Mammary epithelial cell (primary cell): ENCODE measurements at regions of chr3 and their contacts with region 1.

Region 1: DNA sequence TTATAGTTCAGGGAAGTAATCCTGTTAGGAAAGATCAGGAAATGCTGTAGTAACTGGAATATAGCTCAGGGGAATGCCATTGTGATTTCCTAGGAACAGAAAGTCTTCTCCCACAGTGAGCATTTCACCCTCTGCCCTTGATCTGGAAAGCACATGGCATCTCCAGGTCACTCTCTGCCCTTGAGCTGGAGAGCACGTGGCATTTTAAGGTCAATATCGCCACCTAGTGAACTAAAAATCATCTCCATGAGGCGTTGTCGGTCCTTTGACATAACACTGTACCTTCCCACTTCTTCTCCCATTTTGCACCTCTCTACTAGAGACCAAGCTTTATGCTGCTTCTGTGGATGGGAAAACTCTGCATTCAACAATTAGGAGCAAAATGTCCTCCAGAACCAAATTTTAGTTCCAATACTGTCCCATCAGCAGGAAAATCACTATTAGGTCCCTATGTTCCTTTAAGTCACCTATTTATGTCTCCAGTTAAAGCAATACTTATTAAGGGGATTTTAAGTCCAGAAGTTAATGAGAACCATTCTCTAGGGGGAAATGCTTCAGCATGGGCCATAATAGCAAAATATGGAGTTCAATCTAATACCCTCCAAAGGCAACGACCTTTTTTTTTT is 54.7 kb upstream of the GK5 start:
- DNase-seq: peak; percentile 59
- H3K4me3 ChIP-seq: no peak overlapping the region
- H3K27ac ChIP-seq: no peak overlapping the region
- H3K4me1 ChIP-seq: peaks cover 7% of the 10 kb centered on the region
- H3K27me3 ChIP-seq: no peaks in the 10 kb centered on the region
- CTCF ChIP-seq: peak; percentile 58 to 66

Region 2: DNA sequence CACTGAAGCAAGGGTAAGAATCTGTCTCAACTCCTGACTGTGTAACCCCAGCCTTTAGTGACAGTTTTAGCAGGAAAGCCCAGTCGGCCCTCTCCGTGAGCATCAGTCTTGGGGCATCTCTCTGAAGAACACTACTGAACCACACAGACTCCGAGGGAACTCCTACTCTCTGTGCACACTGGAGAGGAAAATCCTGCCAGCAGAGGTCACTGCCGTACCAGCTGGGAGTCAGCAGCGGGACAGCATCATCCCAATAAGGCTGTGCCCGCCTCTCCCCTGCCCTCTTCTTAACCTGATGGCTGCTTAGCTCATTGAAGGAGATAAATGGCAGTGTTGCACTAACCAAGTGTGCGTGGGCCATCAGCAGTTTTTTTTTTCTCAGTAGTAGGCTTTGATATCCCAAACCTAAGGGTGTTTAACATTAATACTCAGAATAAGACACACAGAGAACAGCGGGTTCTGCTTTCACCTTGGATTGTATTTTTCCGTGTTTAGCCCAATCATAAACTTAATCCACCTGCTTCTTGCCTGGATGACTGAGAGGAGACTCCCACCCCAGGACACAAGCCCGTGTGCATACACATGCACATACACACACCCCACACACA is 819.9 kb before region 1 on chr3:
- CTCF ChIA-PET with region 1: no interaction called
- dilution Hi-C with region 1: no loop called
- in situ Hi-C with region 1: no loop called
- intact Hi-C with region 1: loop called (anchors 1 kb)
- DNase-seq: peak; percentile 73
- H3K4me3 ChIP-seq: no peak overlapping the region
- H3K27ac ChIP-seq: no peak overlapping the region
- H3K4me1 ChIP-seq: no peaks in the 10 kb centered on the region
- H3K27me3 ChIP-seq: no peaks in the 10 kb centered on the region
- CTCF ChIP-seq: peak; percentile 84 to 88

Region 3: DNA sequence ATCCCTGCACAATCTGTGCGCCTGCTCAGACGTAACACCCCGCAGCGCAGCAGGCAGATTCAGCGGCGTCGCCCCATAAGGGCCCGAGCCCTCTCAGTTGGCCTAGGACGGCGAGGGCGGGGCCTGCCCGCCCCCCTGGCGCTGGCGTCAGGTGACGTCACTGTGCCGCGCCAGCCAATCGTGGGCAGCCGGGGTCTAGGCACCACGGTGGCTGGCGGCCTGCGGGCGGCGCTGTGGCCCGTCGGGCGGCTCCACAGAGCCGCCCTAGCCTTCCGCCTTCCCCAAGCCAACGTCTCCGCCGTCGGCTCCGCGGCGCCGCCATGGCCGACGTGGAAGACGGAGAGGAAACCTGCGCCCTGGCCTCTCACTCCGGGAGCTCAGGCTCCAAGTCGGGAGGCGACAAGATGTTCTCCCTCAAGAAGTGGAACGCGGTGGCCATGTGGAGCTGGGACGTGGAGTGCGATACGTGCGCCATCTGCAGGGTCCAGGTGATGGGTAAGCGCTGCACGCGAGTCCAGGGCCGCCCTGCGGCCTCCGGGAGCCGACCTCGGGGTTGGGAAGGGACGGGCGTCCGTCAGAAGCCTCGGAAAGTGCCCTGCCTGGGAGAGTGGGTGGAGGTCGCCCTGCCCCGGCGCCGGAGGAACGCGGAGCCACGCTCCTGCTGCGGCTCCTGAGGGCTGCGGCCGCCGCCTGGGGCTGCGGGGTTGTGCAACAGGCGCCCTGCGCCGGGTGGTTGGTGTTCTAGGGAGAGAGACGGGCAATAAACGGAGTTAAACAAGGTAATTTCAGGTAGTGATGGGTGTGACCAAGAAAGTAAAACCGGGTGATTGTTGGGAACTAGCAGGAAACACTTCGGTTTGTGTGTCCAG is 541.8 kb before region 1 on chr3 and contains the start of gene RNF7:
- CTCF ChIA-PET with region 1: no interaction called
- dilution Hi-C with region 1: no loop called
- in situ Hi-C with region 1: no loop called
- intact Hi-C with region 1: loop called (anchors 2 kb)
- DNase-seq: peak; percentile 95
- H3K4me3 ChIP-seq: peak within 1 kb of the TSS; percentile 94 to 98 (median 95)
- H3K27ac ChIP-seq: peak within 1 kb of the TSS; percentile 82
- H3K4me1 ChIP-seq: peaks cover 13% of the 10 kb centered on the region
- H3K27me3 ChIP-seq: no peaks in the 10 kb centered on the region
- CTCF ChIP-seq: peak; percentile 55 to 91
- total RNA-seq, gene RNF7: 48.3 to 97.7 TPM

Region 4: DNA sequence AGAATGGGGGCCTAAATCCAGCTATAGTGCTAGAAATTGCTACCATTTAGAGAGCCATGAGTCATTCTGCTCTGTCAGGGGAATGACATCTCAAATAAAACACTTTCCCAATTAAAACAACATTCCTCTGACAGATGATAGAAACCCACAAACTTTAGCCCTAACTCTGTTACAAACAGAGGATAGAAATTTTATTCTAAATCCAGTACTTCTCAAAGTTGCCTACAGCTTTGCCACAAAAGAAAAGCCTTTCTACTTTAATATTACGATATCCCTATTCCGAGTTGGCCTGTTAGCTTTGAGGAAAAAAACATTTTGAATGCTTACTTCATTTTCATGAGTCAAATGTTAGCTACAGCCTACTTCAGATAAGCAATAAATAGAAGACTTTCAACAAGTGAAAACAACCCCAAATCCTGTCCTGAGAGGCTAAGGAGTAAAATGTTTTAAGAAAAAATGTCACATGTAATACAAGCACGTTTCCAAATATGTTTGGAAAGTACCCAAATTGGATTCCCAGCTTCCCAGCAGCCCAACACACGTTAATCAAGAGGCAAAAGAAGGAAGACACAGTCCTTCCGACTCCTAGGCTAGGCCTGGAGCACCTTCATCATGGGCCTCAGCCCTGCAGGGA is 320.0 kb before region 1 on chr3:
- CTCF ChIA-PET with region 1: no interaction called
- dilution Hi-C with region 1: no loop called
- in situ Hi-C with region 1: no loop called
- intact Hi-C with region 1: loop called (anchors 1 kb)
- DNase-seq: peak; percentile 61
- H3K4me3 ChIP-seq: no peak overlapping the region
- H3K27ac ChIP-seq: peak overlapping the region; percentile 57
- H3K4me1 ChIP-seq: peaks cover 21% of the 10 kb centered on the region
- H3K27me3 ChIP-seq: no peaks in the 10 kb centered on the region
- CTCF ChIP-seq: no peak

Region 5: DNA sequence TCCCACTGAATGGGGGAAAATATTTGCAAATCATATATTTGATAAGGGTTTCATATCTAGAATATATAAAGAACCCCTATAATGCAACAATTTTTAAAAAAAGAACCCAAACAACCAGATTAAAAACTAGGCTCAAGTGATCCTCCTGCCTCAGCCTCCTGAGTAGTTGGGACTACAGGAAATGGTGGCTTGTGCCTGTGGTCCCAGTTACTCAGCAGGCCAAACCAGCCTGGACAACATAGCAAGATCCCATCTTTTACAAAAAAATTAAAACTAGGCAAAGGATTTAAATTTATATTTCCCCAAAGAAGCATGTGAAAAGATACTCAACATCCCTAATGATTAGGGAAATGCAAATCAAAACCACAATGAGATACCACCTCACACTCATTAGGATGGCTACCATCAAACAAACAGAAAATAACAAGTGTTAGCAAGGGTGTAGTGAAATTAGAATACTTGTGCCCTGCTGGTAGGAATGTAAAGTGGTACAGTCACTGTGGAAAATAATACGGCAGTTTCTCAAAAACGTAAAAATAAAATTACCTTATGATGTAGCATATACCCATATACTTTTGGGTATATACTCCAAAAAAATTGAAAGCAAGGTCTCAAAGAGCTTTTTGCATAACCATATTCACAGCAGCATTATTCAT is 150.4 kb before region 1 on chr3:
- CTCF ChIA-PET with region 1: interaction called, 6 read pairs
- dilution Hi-C with region 1: no loop called
- in situ Hi-C with region 1: loop called (anchors 5 to 10 kb)
- intact Hi-C with region 1: loop called (anchors 1 kb)
- DNase-seq: no peak
- H3K4me3 ChIP-seq: no peak overlapping the region
- H3K27ac ChIP-seq: no peak overlapping the region
- H3K4me1 ChIP-seq: no peaks in the 10 kb centered on the region
- H3K27me3 ChIP-seq: no peaks in the 10 kb centered on the region
- CTCF ChIP-seq: no peak

Region 6: GRCh38 chr3:142224482-142225072 is 55.5 kb before region 1 on chr3:
- CTCF ChIA-PET with region 1: no interaction called
- dilution Hi-C with region 1: no loop called
- in situ Hi-C with region 1: no loop called
- intact Hi-C with region 1: loop called (anchors 2 kb)
- DNase-seq: no peak
- H3K4me3 ChIP-seq: peak overlapping the region; percentile 84 to 87 (median 84)
- H3K27ac ChIP-seq: peak overlapping the region; percentile 47
- H3K4me1 ChIP-seq: no peaks in the 10 kb centered on the region
- H3K27me3 ChIP-seq: no peaks in the 10 kb centered on the region
- CTCF ChIP-seq: no peak

Region 7: DNA sequence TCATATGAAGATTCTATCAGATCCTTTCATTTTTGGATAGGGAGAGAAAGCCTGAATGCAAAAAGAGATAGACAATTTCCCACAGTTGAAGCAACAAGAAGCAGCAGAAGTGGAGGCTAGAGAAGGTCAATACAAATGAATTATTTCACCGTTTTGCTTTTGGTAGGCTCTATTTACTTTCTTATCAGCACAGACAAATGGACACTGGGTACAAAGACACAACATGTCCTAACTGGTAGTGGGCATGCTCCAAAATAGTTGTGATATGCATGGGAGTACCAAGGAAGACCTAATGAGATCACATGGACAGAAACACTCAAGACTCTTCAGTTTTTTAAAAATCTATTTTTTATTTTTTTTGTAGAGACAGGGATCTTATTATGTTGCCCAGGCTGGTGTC is 68.4 kb after region 1 on chr3:
- CTCF ChIA-PET with region 1: no interaction called
- dilution Hi-C with region 1: no loop called
- in situ Hi-C with region 1: no loop called
- intact Hi-C with region 1: no loop called
- DNase-seq: no peak
- H3K4me3 ChIP-seq: no peak overlapping the region
- H3K27ac ChIP-seq: no peak overlapping the region
- H3K4me1 ChIP-seq: no peaks in the 10 kb centered on the region
- H3K27me3 ChIP-seq: no peaks in the 10 kb centered on the region
- CTCF ChIP-seq: no peak